Uterus (tissue), 4 donors: ENCODE measurements at regions of chr1 and their contacts with region 1.

Region 1: DNA sequence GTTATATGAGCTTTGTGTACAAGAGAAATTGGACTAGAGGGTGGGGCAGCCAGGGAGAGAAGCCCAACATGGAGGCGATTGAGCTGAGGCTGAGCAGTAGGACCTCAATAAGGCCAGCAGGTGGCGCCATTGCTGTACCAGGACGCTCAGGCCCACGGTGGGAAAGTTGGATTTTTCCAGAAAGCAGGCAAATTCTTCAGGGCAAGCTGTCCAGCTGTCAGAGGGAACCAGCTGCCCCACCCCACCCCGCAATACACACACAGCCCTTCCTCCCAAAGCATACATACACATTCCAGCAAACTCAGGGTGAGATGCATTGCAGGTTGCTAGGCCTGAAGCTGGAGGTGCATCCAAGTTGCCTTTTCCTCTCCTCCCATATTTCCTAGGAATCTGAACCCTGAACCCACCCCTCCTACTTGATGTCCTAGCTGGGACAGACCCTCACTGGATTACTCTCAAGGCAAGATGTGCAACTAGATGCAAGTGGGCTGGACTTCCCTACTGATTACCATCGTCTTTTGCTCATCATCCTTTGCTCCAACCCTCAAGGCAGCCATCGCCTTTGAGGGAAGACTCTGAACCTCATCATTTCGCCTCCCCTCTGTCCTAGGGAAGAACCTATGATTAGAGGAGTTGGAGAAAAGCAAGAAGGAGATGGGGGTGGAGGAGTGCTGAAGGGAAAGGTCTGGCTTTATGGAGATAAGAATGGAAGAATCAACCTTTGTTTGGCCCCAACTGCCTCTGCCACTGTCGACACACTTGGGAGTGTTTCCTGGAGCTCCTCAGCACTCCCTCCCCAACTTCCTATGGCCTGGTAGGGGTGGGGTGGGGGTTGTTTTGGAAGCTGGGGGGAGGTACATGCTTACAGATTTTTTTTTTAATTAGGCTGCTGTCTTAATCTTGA is 25.5 kb downstream of the CD34 start:
- DNase-seq: peak; percentile 86 to 90
- H3K4me3 ChIP-seq: no peak overlapping the region
- H3K27ac ChIP-seq: peak overlapping the region; percentile 34 to 85
- H3K4me1 ChIP-seq: peaks cover 0 to 3% of the 10 kb centered on the region in 2 donors
- H3K27me3 ChIP-seq: no peaks in the 10 kb centered on the region
- CTCF ChIP-seq: peak; percentile 93 to 98 (median 94)
- POLR2A ChIP-seq: no peak

Region 2: DNA sequence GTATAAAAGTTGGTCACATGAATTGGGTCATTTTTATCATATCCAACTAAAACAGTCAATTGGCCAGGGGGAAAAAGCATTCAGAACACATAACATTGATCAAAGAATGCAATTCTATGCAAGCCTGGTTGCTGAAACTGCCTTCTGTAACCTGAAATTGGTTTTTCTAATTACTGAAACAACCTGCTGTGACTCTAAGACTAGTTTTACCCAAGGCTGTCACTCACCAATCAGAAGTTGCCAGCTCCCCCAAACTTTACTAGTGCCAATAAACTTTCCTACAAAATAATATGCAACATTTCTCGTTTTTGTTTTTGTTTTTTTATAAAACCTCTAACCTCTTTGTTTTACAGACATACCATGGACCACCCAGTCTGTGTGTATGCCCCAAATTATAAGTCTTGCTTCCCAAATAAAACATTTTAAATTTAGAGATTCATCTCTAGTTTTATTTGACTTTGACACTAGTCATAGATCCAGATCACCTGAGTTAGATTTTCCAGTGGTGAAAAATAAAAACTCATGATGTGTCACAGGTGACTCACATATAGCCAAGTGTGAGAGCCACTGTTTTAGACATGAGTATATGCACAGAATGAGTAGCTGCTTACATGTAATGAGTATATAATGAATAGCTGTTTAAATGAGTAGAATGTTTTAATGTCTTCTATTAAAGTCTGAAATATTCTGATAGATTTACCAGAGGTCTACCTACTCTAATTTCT is 495.5 kb before region 1 on chr1:
- intact Hi-C with region 1: no loop called
- DNase-seq: no peak
- H3K4me3 ChIP-seq: no peak overlapping the region
- H3K27ac ChIP-seq: no peak overlapping the region
- H3K4me1 ChIP-seq: no peaks in the 10 kb centered on the region
- H3K27me3 ChIP-seq: no peaks in the 10 kb centered on the region
- CTCF ChIP-seq: no peak
- POLR2A ChIP-seq: no peak

Region 3: GRCh38 chr1:207963427-207964194 is 78.2 kb after region 1 on chr1:
- intact Hi-C with region 1: loop called (anchors 2 kb)
- DNase-seq: peak; percentile 86 to 97
- H3K4me3 ChIP-seq: peak overlapping the region; percentile 51 to 55
- H3K27ac ChIP-seq: peak overlapping the region; percentile 86 to 96
- H3K4me1 ChIP-seq: no peaks in the 10 kb centered on the region
- H3K27me3 ChIP-seq: no peaks in the 10 kb centered on the region
- CTCF ChIP-seq: peak; percentile 94 to 100 (median 100)
- POLR2A ChIP-seq: peak; percentile 77 to 91